ENCODE measurements at regions of chr10 and their contacts with region 1.

Region 1: GRCh38 chr10:92517034-92517655 is 56.7 kb downstream of the IDE start:
- DNase-seq: no peak

Region 2: DNA sequence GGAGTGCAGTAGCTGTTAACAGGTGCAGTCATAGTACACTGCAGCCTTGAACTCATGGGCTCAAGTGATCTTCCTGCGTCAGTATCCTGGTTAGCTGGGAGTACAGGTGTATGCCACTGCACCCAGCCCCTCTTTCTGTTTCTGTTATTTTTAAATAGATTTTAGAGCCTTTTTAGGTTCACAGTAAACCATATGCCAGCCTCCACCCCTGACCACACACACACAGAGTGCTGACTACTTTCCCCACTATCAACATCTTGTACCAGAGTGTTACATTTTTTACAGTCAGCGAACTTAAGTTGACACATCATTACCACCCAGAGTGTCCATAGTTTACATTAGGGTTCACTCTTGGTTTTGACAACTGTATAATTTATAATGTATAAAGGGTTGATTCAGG is 194.1 kb before region 1 on chr10:
- intact Hi-C with region 1: no loop called
- DNase-seq: no peak

Region 3: DNA sequence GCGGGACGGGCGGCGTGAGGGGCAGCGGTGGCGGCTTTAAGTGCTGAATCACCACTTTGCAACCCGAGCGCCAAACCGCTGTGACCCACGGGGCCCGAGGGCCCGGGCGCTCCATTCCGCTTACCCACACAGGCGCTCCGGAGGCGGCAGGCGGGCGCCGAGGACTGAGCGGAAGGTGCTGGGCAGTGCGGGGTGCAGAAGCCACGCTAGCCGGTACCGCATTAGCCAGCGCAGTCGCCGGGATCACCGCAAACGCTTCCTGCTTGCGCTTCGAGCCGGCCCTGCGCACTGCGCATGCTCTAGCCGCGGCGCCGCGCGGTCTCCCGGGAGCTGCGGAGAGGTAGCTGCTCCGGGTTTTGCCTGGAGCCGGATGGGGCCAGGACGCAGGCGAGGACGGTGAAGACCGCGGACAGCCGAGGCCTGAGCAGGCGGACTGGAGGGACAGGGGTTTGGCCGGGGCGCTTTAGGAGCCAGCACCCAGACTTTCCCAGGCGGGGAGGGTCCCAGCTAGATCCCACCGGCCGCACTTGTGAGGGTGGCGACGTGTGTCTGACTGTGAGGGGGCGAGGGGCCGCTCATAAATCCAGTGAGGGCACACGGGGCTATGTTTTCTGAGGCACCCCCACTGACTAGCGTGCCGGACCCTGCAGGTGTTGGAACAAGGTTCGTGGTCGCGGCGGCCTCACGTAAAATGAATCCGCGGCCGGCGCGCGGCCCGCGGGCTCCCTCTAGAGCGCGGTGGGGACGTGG is 56.8 kb after region 1 on chr10 and contains the start of gene IDE:
- intact Hi-C with region 1: loop called (anchors 2 to 5 kb)
- DNase-seq: peak; percentile 96
- total RNA-seq, gene IDE: 40.1 to 45.6 TPM

Measured in posterior vena cava (tissue), 2 donors.